Right ventricle myocardium inferior (tissue), 1 donor: ENCODE measurements at regions of chr3 and their contacts with region 1.

Region 1: GRCh38 chr3:4698125-4698821 is 205.1 kb downstream of the ITPR1 start:
- DNase-seq: no peak
- ATAC-seq: no peak

Region 2: GRCh38 chr3:4759689-4760312 is 61.5 kb after region 1 on chr3:
- intact Hi-C with region 1: loop called (anchors 2 kb)
- DNase-seq: no peak
- ATAC-seq: no peak